AG04450 (cell line): ENCODE measurements at regions of chr9 and their contacts with region 1.

Region 1: DNA sequence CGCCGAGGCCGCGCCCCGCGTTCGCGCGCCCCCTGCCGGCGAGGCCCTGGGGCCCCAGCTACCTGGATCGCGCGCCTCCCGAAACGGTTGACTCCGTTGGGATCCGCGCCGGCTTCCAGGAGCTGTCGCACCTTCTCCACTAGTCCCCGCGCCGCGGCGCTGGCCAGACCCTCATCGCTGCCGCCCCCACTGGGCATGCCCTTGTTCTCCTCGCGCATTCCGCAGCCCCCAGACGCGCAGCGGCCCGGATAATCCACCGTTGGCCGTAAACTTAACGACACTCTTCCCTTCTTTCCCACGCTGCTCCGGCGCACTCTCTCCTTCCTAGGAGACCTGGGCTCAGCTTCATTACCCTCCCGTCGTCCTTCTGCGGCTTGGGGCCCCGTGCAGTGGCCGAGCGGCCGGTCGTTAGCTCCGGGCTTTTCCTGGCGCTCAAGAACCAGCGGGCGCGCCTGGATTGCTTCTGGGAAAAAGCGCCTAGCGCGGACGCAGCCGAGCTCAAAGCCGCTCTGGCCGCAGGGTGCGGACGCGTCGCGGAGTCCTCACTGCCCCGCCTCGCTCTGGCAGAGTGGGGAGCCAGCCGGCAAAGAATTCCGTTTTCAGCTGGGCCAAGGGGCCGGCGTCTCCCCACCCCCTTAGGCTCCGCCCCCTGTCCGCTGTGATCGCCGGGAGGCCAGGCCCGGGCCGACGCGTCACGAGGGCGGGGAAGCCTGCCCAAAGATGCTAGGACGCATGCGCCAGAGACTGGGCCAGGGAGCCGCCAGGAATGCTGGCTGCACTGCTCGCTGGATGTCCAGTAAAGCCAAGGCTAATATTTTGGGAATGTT is at the start of gene CDKN2B:
- DNase-seq: peak; percentile 92
- H3K4me3 ChIP-seq: peak within 1 kb of the TSS; percentile 83
- H3K27ac ChIP-seq: peak within 1 kb of the TSS; percentile 95
- H3K27me3 ChIP-seq: no peaks in the 10 kb centered on the region
- CTCF ChIP-seq: peak; percentile 86
- polyA plus RNA-seq, gene CDKN2B: 10.2 and 10.7 TPM in 2 replicates

Region 2: GRCh38 chr9:21802195-21803000 is 206.6 kb before region 1 on chr9 and contains the start of gene MTAP:
- CTCF ChIA-PET with region 1: interaction called, 192 read pairs
- POLR2A ChIA-PET with region 1: interaction called, 15 read pairs
- DNase-seq: peak; percentile 87
- H3K4me3 ChIP-seq: peak within 1 kb of the TSS; percentile 86
- H3K27ac ChIP-seq: peak within 1 kb of the TSS; percentile 84
- H3K27me3 ChIP-seq: no peaks in the 10 kb centered on the region
- CTCF ChIP-seq: no peak
- polyA plus RNA-seq, gene MTAP: 21.7 and 26.1 TPM in 2 replicates

Region 3: GRCh38 chr9:21968331-21969010 is 40.5 kb before region 1 on chr9:
- CTCF ChIA-PET with region 1: interaction called, 29 read pairs
- POLR2A ChIA-PET with region 1: interaction called, 6 read pairs
- DNase-seq: no peak
- H3K4me3 ChIP-seq: 0 out of 2 replicates have a peak overlapping the region, but pooled peaks have one; percentile 25
- H3K27ac ChIP-seq: no peak overlapping the region
- H3K27me3 ChIP-seq: peaks cover 57% of the 10 kb centered on the region
- CTCF ChIP-seq: no peak

Region 4: GRCh38 chr9:22022396-22022795 is 13.4 kb after region 1 on chr9:
- CTCF ChIA-PET with region 1: interaction called, 15 read pairs
- POLR2A ChIA-PET with region 1: no interaction called
- DNase-seq: no peak
- H3K4me3 ChIP-seq: no peak overlapping the region
- H3K27ac ChIP-seq: no peak overlapping the region
- H3K27me3 ChIP-seq: no peaks in the 10 kb centered on the region
- CTCF ChIP-seq: no peak

Region 5: DNA sequence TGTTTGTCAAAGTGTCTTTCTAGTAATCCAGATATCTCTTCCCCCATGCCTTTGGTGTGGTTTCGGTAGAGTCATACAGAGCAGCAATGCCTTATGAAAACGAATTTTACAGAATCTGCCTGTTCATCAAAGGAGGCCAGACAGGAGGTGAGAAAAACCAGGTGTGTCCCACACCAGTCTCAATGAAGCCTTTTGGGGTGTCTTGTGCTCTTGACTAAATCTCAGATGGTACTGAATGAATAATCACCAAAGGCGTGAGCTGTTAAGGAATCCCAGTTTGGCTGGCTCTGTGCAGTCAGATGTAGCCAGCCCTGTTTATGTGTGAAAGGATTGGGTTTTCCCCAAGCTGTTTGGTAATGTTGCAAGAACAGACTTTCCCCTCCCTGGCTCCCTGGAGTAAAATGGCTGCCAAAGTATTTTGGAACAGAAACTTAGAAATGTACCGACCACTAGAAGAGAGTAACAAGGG is 71.0 kb after region 1 on chr9:
- CTCF ChIA-PET with region 1: interaction called, 16 read pairs
- POLR2A ChIA-PET with region 1: no interaction called
- DNase-seq: peak; percentile 43
- H3K4me3 ChIP-seq: no peak overlapping the region
- H3K27ac ChIP-seq: peak overlapping the region; percentile 11
- H3K27me3 ChIP-seq: no peaks in the 10 kb centered on the region
- CTCF ChIP-seq: no peak

Region 6: DNA sequence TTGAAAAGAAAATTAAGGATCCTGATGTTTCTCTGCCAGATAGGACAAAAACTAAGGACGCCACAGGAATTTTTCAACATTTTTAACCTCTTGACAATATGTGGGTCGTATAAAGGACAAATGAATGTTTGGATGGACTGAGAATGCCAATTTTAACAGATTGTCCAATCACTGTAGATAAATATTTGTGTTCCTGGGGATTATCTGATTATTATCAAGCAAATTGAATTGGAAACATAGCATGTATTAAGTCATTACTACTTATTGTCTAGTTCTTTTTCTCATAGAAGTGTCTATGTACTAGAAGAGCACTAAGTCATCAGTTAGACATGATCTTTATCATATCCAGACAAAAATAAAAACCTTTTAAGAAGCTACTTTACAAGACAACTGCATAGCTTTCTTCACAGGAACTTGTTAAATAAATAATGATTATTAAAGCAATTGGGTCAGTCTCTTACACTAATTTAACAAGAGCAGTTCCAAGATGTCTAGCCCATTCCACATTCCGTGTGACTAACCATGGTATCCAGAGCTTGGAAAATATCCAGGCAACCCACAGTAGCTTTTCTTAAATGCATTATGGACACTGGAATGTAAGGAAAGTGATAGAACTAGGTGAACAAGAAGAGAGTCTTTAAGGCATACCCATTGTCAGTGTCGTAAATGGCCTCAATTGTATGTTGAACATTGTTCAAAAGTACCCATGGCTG is 127.7 kb after region 1 on chr9:
- CTCF ChIA-PET with region 1: interaction called, 10 read pairs
- POLR2A ChIA-PET with region 1: no interaction called
- DNase-seq: peak; percentile 61
- H3K4me3 ChIP-seq: no peak overlapping the region
- H3K27ac ChIP-seq: no peak overlapping the region
- H3K27me3 ChIP-seq: no peaks in the 10 kb centered on the region
- CTCF ChIP-seq: no peak

Region 7: DNA sequence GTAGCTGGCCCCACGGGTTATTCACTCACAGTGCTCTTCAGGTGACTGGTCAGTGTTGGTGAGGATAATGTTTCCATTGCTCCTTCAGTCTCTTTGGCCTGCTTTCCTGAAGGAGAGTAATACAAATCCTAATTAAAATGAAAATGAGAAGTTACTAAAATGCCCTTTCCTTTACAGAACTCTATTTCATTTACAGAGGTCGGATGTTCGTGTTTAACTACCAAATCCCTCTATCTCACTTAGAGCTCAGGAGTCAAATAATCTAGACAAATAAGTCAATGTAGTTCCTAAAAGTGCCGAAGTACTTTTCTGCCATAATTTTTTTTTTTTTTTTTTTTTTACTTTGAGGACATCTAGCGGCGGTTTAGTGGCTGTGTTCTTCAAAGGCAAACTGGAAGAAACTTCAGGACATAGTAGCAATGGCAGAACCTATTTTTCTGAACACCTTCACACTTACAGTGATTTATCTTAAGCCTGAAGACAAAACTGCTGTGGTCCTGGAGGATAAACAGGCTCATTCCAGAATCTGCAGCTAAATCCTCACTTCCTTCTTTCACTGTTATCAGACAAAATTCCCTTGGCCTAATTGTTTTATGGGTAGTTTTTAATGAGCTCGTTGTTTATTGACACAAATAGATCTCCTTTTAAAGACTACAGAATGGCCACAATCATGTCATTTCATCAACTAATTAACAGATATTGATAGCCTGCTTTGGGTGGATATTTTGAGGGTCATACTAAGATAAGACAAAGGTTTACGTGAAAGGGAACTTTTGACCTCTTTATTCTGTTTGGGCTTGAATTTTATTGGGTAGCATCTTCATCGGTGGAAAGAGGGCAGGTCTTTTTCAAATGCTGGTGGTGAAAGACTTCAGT is 230.1 kb after region 1 on chr9:
- CTCF ChIA-PET with region 1: interaction called, 178 read pairs
- POLR2A ChIA-PET with region 1: interaction called, 13 read pairs
- DNase-seq: no peak
- H3K4me3 ChIP-seq: no peak overlapping the region
- H3K27ac ChIP-seq: no peak overlapping the region
- H3K27me3 ChIP-seq: no peaks in the 10 kb centered on the region
- CTCF ChIP-seq: peak; percentile 66